Activated CD8-positive, alpha-beta T cell treated with anti-CD3 and anti-CD28 coated beads for 36 hours (primary cell): ENCODE measurements at regions of chr17 and their contacts with region 1.

Region 1: DNA sequence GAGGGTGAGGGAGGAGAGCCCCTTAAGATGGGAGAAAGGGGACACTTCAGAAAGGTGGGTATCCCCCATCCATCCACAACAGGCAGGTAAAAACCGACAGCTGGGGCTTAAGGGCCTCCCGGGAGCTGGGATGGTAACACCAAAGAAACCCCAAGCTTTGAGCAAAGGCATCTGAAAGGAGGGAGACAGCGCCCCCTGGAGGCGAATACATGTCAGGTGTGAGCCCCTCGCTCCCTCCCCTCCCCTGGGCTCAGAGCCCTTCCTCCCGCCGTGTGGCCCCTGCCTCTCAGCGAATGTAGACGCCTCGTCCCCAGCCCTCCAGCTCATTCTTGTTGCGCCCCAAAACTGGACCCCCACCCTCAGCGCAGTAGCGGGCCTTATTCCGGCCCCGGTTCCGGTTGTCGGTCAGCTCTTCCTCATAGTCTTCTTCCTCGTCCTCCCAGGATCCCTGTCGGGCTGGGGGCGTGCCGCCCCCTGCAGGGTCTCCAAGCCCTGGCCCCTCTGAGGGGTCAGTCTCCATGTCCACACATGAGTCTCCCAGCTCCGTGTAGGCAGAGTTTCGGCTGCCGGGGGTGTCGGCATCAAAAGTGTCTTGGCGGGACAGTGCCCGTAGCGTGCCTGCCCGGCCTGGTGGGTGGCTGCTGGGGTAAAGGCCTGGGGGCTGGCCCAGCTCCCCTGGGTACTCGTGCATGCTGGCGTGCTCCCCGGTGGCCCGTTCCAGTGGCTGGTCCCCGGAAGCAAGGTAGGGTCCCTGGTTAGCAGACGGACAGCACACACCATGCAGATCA is 9.1 kb upstream of the ARL5C start:
- DNase-seq: peak; percentile 92
- ATAC-seq: peak; percentile 84
- H3K4me3 Mint-ChIP-seq: no peak overlapping the region
- H3K27ac Mint-ChIP-seq: no peak overlapping the region
- H3K4me1 Mint-ChIP-seq: peaks cover 10% of the 10 kb centered on the region
- H3K27me3 Mint-ChIP-seq: no peaks in the 10 kb centered on the region
- CTCF ChIP-seq: peak; percentile 91

Region 2: GRCh38 chr17:39069114-39069756 is 105.9 kb before region 1 on chr17:
- CTCF ChIA-PET with region 1: interaction called, 10 read pairs
- POLR2A ChIA-PET with region 1: no interaction called
- intact Hi-C with region 1: no loop called
- DNase-seq: peak; percentile 45
- ATAC-seq: peak; percentile 96
- H3K4me3 Mint-ChIP-seq: no peak overlapping the region
- H3K27ac Mint-ChIP-seq: no peak overlapping the region
- H3K4me1 Mint-ChIP-seq: peaks cover 5% of the 10 kb centered on the region
- H3K27me3 Mint-ChIP-seq: no peaks in the 10 kb centered on the region
- CTCF ChIP-seq: peak; percentile 57

Region 3: GRCh38 chr17:39186481-39187002 is 11.4 kb after region 1 on chr17:
- CTCF ChIA-PET with region 1: interaction called, 27 read pairs
- POLR2A ChIA-PET with region 1: interaction called, 6 read pairs
- intact Hi-C with region 1: no loop called
- DNase-seq: no peak
- ATAC-seq: no peak
- H3K4me3 Mint-ChIP-seq: no peak overlapping the region
- H3K27ac Mint-ChIP-seq: no peak overlapping the region
- H3K4me1 Mint-ChIP-seq: no peaks in the 10 kb centered on the region
- H3K27me3 Mint-ChIP-seq: no peaks in the 10 kb centered on the region
- CTCF ChIP-seq: no peak

Region 4: GRCh38 chr17:39199820-39200069 is 24.6 kb after region 1 on chr17:
- CTCF ChIA-PET with region 1: interaction called, 20 read pairs
- POLR2A ChIA-PET with region 1: interaction called, 10 read pairs
- intact Hi-C with region 1: no loop called
- DNase-seq: peak; percentile 98
- ATAC-seq: peak; percentile 64
- H3K4me3 Mint-ChIP-seq: peak overlapping the region; percentile 90
- H3K27ac Mint-ChIP-seq: peak overlapping the region; percentile 99
- H3K4me1 Mint-ChIP-seq: peaks cover 53% of the 10 kb centered on the region
- H3K27me3 Mint-ChIP-seq: no peaks in the 10 kb centered on the region
- CTCF ChIP-seq: no peak

Region 5: GRCh38 chr17:39235555-39236449 is 60.7 kb after region 1 on chr17:
- CTCF ChIA-PET with region 1: interaction called, 20 read pairs
- POLR2A ChIA-PET with region 1: no interaction called
- intact Hi-C with region 1: no loop called
- DNase-seq: peak; percentile 80
- ATAC-seq: peak; percentile 77
- H3K4me3 Mint-ChIP-seq: no peak overlapping the region
- H3K27ac Mint-ChIP-seq: no peak overlapping the region
- H3K4me1 Mint-ChIP-seq: peaks cover 35% of the 10 kb centered on the region
- H3K27me3 Mint-ChIP-seq: peaks cover 2% of the 10 kb centered on the region
- CTCF ChIP-seq: peak; percentile 83